CD8-positive, alpha-beta T cell (primary cell): ENCODE measurements at regions of chr14 and their contacts with region 1.

Region 1: GRCh38 chr14:65927931-65928356 is 515.4 kb downstream of the FUT8 start:
- DNase-seq: peak; percentile 41 to 84 (median 77)
- ATAC-seq: peak; percentile 89
- H3K4me3 ChIP-seq: no peak overlapping the region
- H3K4me3 Mint-ChIP-seq: peak overlapping the region; percentile 56
- H3K27ac ChIP-seq: peak overlapping the region; percentile 43 to 68
- H3K27ac Mint-ChIP-seq: peak overlapping the region; percentile 87
- H3K4me1 ChIP-seq: peaks cover 45% of the 10 kb centered on the region
- H3K4me1 Mint-ChIP-seq: peaks cover 55% of the 10 kb centered on the region
- H3K27me3 ChIP-seq: no peaks in the 10 kb centered on the region
- H3K27me3 Mint-ChIP-seq: no peaks in the 10 kb centered on the region
- CTCF ChIP-seq: no peak

Region 2: DNA sequence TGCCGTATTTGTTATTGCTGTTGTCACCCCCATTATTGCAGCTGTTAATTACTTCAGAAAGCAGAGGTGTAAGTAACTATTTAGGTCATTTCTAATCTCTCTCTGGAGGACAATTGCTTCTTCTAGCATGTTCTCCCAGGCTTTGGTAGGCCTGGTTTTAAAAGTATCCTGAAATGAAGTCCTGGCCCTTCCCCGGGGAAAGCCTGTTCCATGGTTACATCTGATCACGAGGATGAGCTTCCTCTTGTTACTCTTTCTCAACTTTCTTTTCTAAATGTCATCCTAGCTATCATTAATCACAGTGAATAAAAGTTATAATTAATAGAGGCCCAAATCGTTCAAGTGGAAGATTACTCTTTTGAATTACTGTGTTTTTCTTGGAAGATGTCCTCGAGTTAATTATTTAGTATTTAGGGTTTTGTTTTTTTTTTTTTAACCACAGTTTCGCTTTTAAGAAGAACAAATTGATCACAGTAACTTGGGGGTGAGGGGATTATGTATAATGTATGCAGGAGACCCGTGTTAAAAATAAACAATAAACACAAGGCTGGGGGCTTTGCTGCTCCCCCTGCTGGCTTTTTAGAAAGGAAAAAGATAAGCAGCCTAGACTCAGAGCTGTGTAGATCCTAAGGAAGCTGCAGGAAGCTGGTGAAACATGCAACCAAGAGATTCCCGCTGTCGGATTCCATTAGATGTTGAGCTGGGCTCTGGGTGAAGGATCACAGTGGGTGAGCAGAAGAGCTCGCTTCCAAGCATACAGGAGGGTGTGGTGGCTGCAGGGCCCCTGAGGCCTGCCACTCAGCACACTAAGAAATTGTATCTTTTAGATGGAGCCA is 95.3 kb before region 1 on chr14:
- CTCF ChIA-PET with region 1: interaction called, 4 read pairs
- POLR2A ChIA-PET with region 1: no interaction called
- intact Hi-C with region 1: loop called in 1 of 2 experiments (anchors 5 kb)
- DNase-seq: no peak
- ATAC-seq: no peak
- H3K4me3 ChIP-seq: no peak overlapping the region
- H3K4me3 Mint-ChIP-seq: no peak overlapping the region
- H3K27ac ChIP-seq: no peak overlapping the region
- H3K27ac Mint-ChIP-seq: no peak overlapping the region
- H3K4me1 ChIP-seq: peaks cover 13% of the 10 kb centered on the region
- H3K4me1 Mint-ChIP-seq: peaks cover 44% of the 10 kb centered on the region
- H3K27me3 ChIP-seq: no peaks in the 10 kb centered on the region
- H3K27me3 Mint-ChIP-seq: no peaks in the 10 kb centered on the region
- CTCF ChIP-seq: no peak

Region 3: GRCh38 chr14:65840118-65840751 is 87.7 kb before region 1 on chr14:
- CTCF ChIA-PET with region 1: no interaction called
- POLR2A ChIA-PET with region 1: no interaction called
- intact Hi-C with region 1: loop called in 1 of 2 experiments (anchors 5 kb)
- DNase-seq: no peak
- ATAC-seq: no peak
- H3K4me3 ChIP-seq: no peak overlapping the region
- H3K4me3 Mint-ChIP-seq: no peak overlapping the region
- H3K27ac ChIP-seq: no peak overlapping the region
- H3K27ac Mint-ChIP-seq: no peak overlapping the region
- H3K4me1 ChIP-seq: peaks cover 58% of the 10 kb centered on the region
- H3K4me1 Mint-ChIP-seq: peaks cover 79% of the 10 kb centered on the region
- H3K27me3 ChIP-seq: no peaks in the 10 kb centered on the region
- H3K27me3 Mint-ChIP-seq: no peaks in the 10 kb centered on the region
- CTCF ChIP-seq: no peak

Region 4: GRCh38 chr14:65879248-65880009 is 48.5 kb before region 1 on chr14:
- CTCF ChIA-PET with region 1: interaction called, 3 read pairs
- POLR2A ChIA-PET with region 1: interaction called, 3 read pairs
- intact Hi-C with region 1: loop called in 1 of 2 experiments (anchors 5 kb)
- DNase-seq: no peak
- ATAC-seq: no peak
- H3K4me3 ChIP-seq: no peak overlapping the region
- H3K4me3 Mint-ChIP-seq: no peak overlapping the region
- H3K27ac ChIP-seq: no peak overlapping the region
- H3K27ac Mint-ChIP-seq: peak overlapping the region; percentile 64
- H3K4me1 ChIP-seq: peaks cover 37% of the 10 kb centered on the region
- H3K4me1 Mint-ChIP-seq: peaks cover 29% of the 10 kb centered on the region
- H3K27me3 ChIP-seq: no peaks in the 10 kb centered on the region
- H3K27me3 Mint-ChIP-seq: no peaks in the 10 kb centered on the region
- CTCF ChIP-seq: no peak